HEK293T (cell line): ENCODE measurements at regions of chr1 and their contacts with region 1.

Region 1: GRCh38 chr1:145891587-145892485 is 6.2 kb upstream of the ANKRD35 start:
- DNase-seq: peak; percentile 95

Region 2: GRCh38 chr1:145823565-145824498 is 68.0 kb before region 1 on chr1 and contains the starts of genes POLR3C and RNF115:
- CTCF ChIA-PET with region 1: no interaction called
- POLR2A ChIA-PET with region 1: no interaction called
- DNase-seq: peak; percentile 91

Region 3: DNA sequence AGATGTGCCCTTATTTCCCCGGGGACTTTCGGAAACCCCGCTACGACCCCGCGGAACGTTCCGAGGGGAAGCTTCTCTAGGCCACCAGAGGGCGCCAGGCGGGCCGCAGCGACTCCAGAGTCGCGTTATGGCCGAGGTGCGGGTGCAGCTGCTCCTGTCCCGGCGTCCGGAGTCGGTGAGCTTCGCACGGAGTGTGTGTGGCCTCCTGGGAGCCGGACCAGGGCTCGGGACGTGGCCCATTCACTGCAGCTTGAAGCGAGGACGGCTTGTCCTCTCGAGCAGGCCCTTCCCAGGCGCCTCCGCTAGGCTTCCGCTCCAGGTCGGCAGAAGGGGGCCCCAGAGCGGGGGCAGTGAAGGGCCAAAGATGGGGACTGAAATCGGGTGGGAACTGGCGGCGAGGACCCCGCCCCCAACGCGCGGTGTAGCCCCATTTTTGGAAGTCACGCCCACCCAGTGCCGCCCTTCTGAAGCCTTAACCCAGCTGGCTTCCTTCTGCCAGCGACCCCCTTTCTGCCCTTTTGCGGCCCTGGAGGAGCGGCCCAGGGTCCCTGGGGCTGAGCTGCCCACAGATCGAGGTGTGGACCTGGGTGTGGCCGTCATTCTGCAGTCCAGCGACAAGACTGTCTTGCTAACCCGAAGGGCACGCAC is 46.2 kb before region 1 on chr1 and contains the start of gene NUDT17:
- CTCF ChIA-PET with region 1: interaction called, 8 read pairs
- POLR2A ChIA-PET with region 1: interaction called, 10 read pairs
- DNase-seq: peak; percentile 94

Region 4: DNA sequence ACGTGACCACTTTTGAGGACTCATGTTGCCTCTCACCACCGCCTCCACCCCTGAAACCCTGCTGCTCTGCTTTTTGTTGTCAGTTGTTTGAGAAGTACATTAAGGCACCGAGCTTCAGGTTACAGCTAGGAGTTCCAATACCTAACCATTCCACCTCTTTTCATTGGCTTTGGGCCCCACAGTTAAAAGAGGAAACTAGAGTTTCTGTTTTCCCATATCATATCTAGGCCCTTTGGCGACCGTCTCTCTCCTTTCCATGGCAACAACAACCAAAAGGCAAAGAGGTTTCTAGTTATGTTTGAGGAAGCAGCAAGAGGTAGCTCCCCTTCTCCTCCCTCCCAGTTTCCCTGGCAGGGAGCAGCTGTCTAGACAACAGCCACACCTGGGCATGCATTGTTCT is 12.1 kb before region 1 on chr1:
- CTCF ChIA-PET with region 1: interaction called, 22 read pairs
- POLR2A ChIA-PET with region 1: interaction called, 6 read pairs
- DNase-seq: no peak

Region 5: DNA sequence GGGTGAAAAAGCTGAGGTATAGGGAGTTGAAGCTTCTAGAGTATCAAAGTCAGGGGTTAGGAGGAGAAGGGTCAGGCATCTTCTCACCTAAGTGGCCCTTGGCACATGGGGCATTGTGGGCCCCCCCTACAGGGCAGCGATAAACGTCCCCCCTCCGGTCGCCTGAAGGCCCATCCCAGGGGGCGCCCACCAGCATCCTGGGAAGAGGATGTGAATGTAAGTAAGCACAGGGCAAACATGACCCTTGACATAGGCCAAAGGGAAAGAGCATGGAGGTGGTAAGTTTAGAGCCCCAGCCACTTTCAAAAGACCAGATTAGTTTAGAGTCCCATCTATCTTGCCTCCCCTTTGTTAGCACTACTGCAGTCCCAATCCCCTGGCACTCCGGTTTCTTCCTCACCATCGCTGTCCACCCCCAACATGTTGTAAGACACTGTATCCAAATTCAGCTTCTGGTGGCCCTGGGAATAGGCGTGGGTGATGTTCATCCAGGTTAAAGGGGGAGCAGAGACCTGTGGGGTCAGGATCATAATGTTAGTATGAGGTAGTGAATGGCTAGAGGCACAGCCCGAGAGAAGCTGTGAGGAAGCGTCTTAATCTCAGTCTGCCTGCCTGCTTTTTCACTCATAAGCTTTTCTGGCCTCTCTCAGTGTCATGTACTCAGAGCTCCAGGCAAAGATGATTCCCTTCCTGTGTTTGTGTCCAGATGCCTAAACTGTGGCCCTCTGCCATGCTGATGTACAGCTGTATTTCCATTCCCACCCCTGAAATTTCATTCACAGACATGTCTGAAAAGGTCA is 15.3 kb after region 1 on chr1:
- CTCF ChIA-PET with region 1: interaction called, 50 read pairs
- POLR2A ChIA-PET with region 1: interaction called, 11 read pairs
- DNase-seq: no peak